ENCODE measurements at regions of chr6 and their contacts with region 1.

Region 1: GRCh38 chr6:56851541-56852259 is 103.2 kb upstream of the BEND6 start:
- DNase-seq: peak; percentile 95
- H3K4me3 ChIP-seq: peak overlapping the region; percentile 63 to 97 (median 94)
- H3K27ac ChIP-seq: peak overlapping the region; percentile 83
- H3K4me1 ChIP-seq: peaks cover 29% of the 10 kb centered on the region
- H3K27me3 ChIP-seq: no peaks in the 10 kb centered on the region
- CTCF ChIP-seq: peak; percentile 47 to 70
- POLR2A ChIP-seq: peak; percentile 78

Region 2: GRCh38 chr6:56637640-56638039 is 214.1 kb before region 1 on chr6:
- CTCF ChIA-PET with region 1: interaction called, 70 read pairs
- POLR2A ChIA-PET with region 1: interaction called, 3 read pairs
- dilution Hi-C with region 1: no loop called
- intact Hi-C with region 1: loop called (anchors 1 kb)
- DNase-seq: peak; percentile 83
- H3K4me3 ChIP-seq: no peak overlapping the region
- H3K27ac ChIP-seq: no peak overlapping the region
- H3K4me1 ChIP-seq: peaks cover 4% of the 10 kb centered on the region
- H3K27me3 ChIP-seq: no peaks in the 10 kb centered on the region
- CTCF ChIP-seq: peak; percentile 41 to 42
- POLR2A ChIP-seq: no peak

Region 3: GRCh38 chr6:56668158-56668557 is 183.5 kb before region 1 on chr6:
- CTCF ChIA-PET with region 1: no interaction called
- POLR2A ChIA-PET with region 1: no interaction called
- dilution Hi-C with region 1: no loop called
- intact Hi-C with region 1: no loop called
- DNase-seq: no peak
- H3K4me3 ChIP-seq: no peak overlapping the region
- H3K27ac ChIP-seq: no peak overlapping the region
- H3K4me1 ChIP-seq: peaks cover 9% of the 10 kb centered on the region
- H3K27me3 ChIP-seq: no peaks in the 10 kb centered on the region
- CTCF ChIP-seq: no peak
- POLR2A ChIP-seq: no peak

Region 4: DNA sequence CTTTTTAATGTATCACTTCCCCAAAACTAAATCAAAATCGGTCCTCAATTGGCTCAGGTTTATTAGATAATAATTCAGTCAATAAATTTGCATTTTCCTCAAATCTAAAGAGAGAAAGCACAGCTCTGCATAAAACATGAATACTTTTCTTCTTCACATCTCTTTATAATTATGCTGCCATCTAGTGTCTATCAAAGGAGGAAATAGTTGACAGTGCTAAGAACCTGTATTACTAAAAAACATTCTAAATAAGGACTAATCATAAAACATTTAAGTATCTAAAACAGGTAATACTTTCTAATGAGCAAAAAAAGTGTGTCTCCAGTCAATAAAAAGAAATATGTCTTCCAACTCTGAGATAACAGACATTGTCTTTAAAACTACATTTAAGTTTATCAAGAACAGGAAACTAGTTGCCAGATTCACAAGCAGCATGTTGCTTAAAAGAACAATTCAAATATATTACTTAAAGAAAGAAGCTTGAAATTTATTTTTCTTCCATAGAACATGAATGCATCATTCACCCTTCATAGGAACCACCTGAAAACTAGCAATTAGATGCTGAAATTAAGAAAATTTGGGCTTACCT is 152.5 kb before region 1 on chr6:
- CTCF ChIA-PET with region 1: interaction called, 34 read pairs
- POLR2A ChIA-PET with region 1: no interaction called
- dilution Hi-C with region 1: no loop called
- intact Hi-C with region 1: no loop called
- DNase-seq: peak; percentile 63
- H3K4me3 ChIP-seq: no peak overlapping the region
- H3K27ac ChIP-seq: no peak overlapping the region
- H3K4me1 ChIP-seq: peaks cover 16% of the 10 kb centered on the region
- H3K27me3 ChIP-seq: no peaks in the 10 kb centered on the region
- CTCF ChIP-seq: peak; percentile 13 to 25
- POLR2A ChIP-seq: no peak

Region 5: GRCh38 chr6:56714982-56715456 is 136.7 kb before region 1 on chr6:
- CTCF ChIA-PET with region 1: interaction called, 70 read pairs
- POLR2A ChIA-PET with region 1: no interaction called
- dilution Hi-C with region 1: no loop called
- intact Hi-C with region 1: no loop called
- DNase-seq: peak; percentile 95
- H3K4me3 ChIP-seq: no peak overlapping the region
- H3K27ac ChIP-seq: peak overlapping the region; percentile 86
- H3K4me1 ChIP-seq: peaks cover 50% of the 10 kb centered on the region
- H3K27me3 ChIP-seq: no peaks in the 10 kb centered on the region
- CTCF ChIP-seq: no peak
- POLR2A ChIP-seq: peak; percentile 34

Region 6: DNA sequence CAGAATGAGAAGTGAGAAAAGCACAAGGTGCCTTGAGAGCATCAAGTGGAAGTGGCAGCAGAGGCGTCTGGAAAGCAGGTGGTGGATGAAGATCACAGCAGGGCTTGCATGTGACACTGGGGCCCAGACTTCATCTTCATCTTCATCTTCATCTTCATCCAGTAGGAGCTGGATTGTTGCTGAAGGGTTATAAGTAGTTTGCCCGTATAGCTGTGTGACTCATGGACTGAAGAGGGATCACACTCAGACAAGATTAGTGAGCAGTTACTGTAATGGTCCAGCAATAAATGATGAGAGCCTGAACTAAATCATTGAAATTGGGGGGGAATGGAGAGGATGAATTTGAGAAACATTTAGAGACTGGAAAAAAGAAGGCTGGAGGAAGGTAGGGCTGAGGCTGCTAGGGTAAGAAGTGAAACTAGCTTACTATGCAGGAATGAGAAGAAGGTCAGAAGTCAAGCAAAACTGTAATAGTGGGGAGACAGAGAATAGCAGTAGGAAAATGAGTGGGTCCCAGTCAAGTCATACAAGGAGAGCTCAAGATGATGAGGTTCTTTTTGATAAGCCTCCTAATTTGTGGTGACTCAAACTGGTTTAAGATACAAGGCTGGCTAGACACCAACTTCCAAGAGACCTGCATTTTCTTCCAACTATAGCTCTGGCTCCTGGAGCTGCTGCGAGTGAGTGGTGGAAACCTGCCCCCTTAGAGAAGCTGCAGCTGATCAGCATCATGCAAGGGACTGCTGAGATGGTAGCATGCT is 10.9 kb after region 1 on chr6:
- CTCF ChIA-PET with region 1: interaction called, 67 read pairs
- POLR2A ChIA-PET with region 1: interaction called, 5 read pairs
- dilution Hi-C with region 1: no loop called
- intact Hi-C with region 1: no loop called
- DNase-seq: peak; percentile 31
- H3K4me3 ChIP-seq: no peak overlapping the region
- H3K27ac ChIP-seq: no peak overlapping the region
- H3K4me1 ChIP-seq: peaks cover 57% of the 10 kb centered on the region
- H3K27me3 ChIP-seq: no peaks in the 10 kb centered on the region
- CTCF ChIP-seq: no peak
- POLR2A ChIP-seq: no peak

Region 7: GRCh38 chr6:56955171-56956045 is 103.7 kb after region 1 on chr6:
- CTCF ChIA-PET with region 1: interaction called, 4 read pairs
- POLR2A ChIA-PET with region 1: no interaction called
- dilution Hi-C with region 1: no loop called
- intact Hi-C with region 1: loop called (anchors 10 kb)
- DNase-seq: peak; percentile 83
- H3K4me3 ChIP-seq: peak overlapping the region; percentile 43 to 83 (median 75)
- H3K27ac ChIP-seq: peak overlapping the region; percentile 52
- H3K4me1 ChIP-seq: peaks cover 17% of the 10 kb centered on the region
- H3K27me3 ChIP-seq: no peaks in the 10 kb centered on the region
- CTCF ChIP-seq: peak; percentile 82 to 88
- POLR2A ChIP-seq: no peak

Measured in endothelial cell of umbilical vein (primary cell).